GM18951 (cell line): ENCODE measurements at regions of chr2 and their contacts with region 1.

Region 1: DNA sequence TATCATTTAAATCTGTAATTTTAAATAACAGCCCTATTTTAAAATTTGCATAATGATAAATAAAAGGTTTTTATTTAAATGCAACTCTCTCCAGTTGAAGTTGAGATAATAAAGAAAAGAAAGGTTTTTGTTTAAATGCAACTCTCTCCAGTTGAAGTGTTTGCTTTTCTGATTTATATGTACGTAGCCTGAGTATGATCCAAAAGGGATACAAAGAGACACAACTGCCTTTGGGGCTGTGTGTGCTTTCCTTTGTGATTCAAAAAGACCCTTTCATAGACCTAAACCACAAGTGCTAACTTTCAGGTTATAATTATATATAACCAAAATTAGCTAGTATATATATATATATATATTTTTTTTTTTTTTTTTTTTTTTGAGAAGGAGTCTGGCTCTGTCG is 76.2 kb upstream of the MFF start:
- POLR2A ChIP-seq: no peak

Region 2: GRCh38 chr2:226943862-226944620 is 304.8 kb before region 1 on chr2:
- in situ Hi-C with region 1: no loop called
- POLR2A ChIP-seq: no peak

Region 3: GRCh38 chr2:227132986-227133385 is 115.9 kb before region 1 on chr2:
- in situ Hi-C with region 1: loop called (anchors 10 kb)
- POLR2A ChIP-seq: no peak

Region 4: GRCh38 chr2:227551836-227552235 is 303.0 kb after region 1 on chr2:
- in situ Hi-C with region 1: no loop called
- POLR2A ChIP-seq: no peak